ENCODE measurements at regions of chr3 and their contacts with region 1.

Region 1: GRCh38 chr3:143718463-143718862 is 129.8 kb downstream of the SLC9A9 start:
- DNase-seq: no peak
- H3K4me3 ChIP-seq: no peak overlapping the region
- H3K27ac ChIP-seq: no peak overlapping the region
- H3K4me1 ChIP-seq: no peaks in the 10 kb centered on the region
- H3K27me3 ChIP-seq: no peaks in the 10 kb centered on the region
- CTCF ChIP-seq: no peak
- EP300 ChIP-seq: no peak
- POLR2A ChIP-seq: no peak

Region 2: DNA sequence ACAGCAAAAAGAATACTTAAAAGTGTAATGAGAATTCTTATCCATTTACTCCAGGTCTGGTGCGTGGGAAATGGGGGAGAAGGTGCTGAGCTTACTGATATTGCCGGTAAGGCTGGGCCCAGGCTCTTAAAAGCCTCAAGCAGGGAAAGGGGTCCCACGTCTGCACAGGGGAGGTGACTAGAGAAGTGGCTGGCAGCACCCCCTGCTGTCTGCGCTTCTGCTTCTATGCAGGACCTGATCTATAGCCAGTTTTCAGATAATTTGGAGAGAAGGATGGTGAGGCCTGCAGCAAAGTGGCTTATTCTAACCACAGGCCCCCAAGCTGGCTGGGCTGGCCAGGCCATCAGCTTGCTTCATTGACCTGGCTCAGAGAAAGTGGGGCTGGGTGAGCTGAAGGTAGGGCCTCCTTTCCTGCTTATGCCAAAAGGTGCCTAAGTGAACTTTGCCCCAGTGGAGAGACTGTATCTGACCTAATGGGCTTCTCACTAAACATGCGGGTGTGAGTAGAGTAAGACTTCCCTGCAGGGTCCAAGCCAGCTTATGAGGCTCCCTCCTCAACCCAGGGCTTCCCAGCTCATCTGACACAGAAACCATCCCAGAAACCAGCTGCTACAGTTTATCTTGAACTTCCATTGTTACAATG is 1872.9 kb before region 1 on chr3:
- intact Hi-C with region 1: loop called in 1 of 4 experiments (anchors 10 kb)
- DNase-seq: no peak
- H3K4me3 ChIP-seq: no peak overlapping the region
- H3K27ac ChIP-seq: no peak overlapping the region
- H3K4me1 ChIP-seq: no peaks in the 10 kb centered on the region
- H3K27me3 ChIP-seq: no peaks in the 10 kb centered on the region
- CTCF ChIP-seq: no peak
- EP300 ChIP-seq: no peak
- POLR2A ChIP-seq: no peak